ENCODE measurements at regions of chr15 and their contacts with region 1.

Region 1: DNA sequence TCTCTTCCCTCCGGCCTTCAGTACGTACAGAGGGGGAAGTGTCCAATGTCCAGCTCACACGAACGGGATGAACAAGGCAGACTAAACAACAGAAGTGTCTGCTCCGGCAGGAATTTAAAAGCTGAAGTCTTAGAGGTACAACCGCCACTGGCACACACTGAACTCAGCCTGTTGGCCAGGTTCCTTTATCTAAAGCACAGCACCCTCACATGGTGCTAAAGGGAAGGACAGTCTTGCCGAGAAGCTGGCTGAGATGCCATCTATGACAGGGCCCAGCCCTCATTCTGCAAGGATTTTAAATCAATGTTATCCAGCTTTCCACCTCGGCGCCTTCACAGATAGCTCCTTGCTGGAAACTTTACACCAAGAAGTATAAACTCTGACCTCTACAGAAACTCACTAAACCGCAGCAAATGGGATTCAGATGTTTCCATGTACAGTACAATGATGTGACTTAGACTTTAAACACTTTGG is 2.8 kb downstream of the ADAMTS17 start:
- DNase-seq: peak; percentile 81 to 86
- H3K4me3 ChIP-seq: no peak overlapping the region
- H3K27ac ChIP-seq: no peak overlapping the region
- H3K4me1 ChIP-seq: peaks cover 10% of the 10 kb centered on the region
- H3K27me3 ChIP-seq: no peaks in the 10 kb centered on the region
- CTCF ChIP-seq: peak in 2 of 3 experiments; percentile 39 to 60
- POLR2A ChIP-seq: no peak

Region 2: DNA sequence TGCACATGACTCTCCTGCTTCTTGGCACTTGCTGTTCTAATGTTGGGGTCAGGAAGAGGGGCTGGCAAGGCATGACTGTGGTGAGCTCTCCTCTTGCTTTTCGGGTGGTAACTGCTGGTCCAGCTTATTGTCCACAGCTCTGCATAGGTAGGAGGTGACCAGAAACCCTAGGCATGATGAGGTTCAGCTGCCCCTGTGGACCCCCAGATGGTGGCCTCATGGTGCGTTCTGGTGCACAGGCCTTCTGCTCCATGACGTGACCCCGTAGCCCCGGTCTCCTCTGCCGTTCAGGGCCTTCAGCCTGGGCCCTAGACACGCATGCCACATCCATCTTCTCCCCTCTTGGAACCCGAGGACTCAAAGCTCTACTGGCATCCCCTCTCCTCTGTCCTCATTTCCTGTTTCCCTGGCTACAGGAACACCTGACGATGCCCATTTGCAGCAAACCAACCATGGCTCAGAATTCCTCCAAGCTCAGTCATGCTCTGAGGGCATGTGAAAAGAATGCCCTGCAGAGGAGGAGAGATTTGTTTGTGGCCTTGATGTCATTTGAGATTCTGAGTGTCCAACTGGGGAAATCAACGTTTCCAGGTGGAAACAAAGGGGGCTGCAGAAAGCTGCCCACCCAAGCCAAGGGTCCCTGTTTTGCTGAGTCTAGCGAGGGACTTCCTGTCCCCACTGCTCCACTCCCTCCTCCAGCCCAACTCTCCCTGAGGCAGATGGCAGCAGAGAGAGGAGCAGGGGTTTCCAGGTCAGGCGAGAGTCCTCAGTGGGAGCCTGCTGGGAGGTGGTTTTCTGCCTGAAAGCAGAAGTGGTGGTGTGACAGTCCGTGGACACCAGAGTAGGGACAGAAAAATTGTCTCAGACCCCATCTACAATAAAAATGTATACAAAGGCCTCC is 407.1 kb before region 1 on chr15:
- intact Hi-C with region 1: loop called (anchors 5 kb)
- DNase-seq: no peak
- H3K4me3 ChIP-seq: no peak overlapping the region
- H3K27ac ChIP-seq: no peak overlapping the region
- H3K4me1 ChIP-seq: no peaks in the 10 kb centered on the region
- H3K27me3 ChIP-seq: no peaks in the 10 kb centered on the region
- CTCF ChIP-seq: no peak
- POLR2A ChIP-seq: no peak

Measured in vagina (tissue), 2 donors.